ENCODE measurements at regions of chr6 and their contacts with region 1.

Region 1: GRCh38 chr6:797479-798077 is 104.6 kb upstream of the EXOC2 start:
- DNase-seq: no peak

Region 2: DNA sequence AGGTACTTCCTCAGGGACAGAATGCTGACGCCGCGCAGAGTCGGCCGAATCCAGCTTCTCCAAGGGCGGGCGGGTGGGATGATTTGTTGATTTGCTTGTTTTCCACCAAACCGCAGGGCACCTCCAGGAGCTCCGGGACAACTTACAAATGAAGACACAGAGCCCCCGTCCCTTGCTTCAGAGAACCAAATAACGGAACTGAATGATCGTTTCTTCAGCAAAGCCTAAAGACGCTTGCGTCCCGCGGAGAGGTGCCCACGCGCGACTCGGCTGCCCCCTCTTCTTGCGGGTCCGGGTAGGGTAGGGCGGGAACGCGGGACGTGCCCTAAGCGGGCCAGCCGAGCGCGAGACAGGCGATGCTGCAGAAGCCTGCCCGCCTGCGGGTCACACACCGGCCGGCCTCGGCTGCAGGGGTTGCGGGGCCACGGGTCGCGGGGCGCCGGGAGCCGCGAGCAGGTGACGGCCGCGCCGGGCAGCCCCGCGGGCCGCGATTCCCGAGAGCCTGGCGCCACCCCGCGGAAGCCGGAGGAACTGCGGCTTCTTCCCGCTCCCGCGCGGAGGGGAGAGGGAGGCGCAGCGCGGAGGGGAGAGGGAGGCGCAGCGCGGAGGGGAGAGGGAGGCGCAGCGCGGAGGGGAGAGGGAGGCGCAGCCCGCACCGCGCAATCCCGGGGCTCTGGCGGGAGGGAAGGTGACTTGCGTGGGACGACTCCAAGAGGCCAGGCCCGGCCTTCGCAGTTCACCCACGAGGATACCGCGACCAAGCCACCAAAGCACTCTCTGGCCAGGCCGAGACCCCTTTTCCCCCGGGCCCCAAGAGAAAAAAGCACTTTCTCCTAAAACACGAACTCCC is 584.1 kb after region 1 on chr6:
- intact Hi-C with region 1: loop called (anchors 2 kb)
- DNase-seq: no peak

Region 3: DNA sequence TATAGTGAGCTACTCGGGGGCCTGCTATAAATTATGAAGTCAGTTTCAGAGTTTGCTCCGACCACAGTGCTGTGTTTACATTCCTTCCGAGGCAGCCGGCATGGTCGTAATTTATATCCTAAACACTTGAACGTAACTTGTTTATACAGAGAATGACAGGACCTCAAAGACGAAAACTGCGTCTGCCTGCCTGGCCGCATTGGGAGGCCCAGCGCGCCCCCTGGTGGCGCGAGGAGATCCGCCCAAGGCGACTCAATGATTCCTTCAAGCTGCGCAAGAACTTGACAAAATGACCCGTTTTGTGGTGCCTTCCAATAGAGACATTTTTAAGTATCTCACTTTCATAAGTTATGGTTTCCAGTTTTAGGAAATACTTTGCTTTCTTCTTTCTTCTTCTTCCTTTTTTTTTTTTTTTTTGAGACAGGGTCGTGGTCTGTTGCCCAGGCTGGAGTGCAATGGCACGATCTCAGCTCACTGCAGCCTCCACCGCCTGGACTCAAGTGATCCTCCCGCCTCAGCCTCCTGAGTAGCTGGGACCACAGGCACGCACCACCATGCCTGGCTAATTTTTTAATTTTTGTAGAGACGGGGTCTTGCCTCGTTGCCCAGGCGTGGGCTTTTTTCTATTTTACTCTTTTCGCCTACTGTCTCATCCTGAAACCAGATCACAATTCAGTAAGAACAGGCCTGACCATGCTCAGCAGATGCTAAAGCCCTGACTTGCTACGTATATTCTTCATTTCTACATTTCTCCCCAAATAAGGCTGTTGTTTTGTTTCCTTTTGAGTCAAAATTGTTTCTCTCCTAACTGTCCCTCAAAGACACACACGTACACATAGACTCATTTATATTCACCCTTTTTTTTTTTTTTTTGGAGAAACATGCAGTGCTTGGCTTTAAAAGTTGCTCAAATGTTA is 599.6 kb after region 1 on chr6:
- intact Hi-C with region 1: loop called (anchors 5 kb)
- DNase-seq: no peak